ENCODE measurements at regions of chr6 and their contacts with region 1.

Region 1: GRCh38 chr6:136706420-136706819 is 85.9 kb downstream of the MAP3K5 start:
- DNase-seq: no peak
- ATAC-seq: no peak
- H3K4me3 ChIP-seq: no peak overlapping the region
- H3K4me3 Mint-ChIP-seq: no peak overlapping the region
- H3K27ac ChIP-seq: no peak overlapping the region
- H3K27ac Mint-ChIP-seq: no peak overlapping the region
- H3K4me1 ChIP-seq: peaks cover 3 to 8% of the 10 kb centered on the region in 2 donors
- H3K4me1 Mint-ChIP-seq: peaks cover 18% of the 10 kb centered on the region
- H3K27me3 ChIP-seq: no peaks in the 10 kb centered on the region
- H3K27me3 Mint-ChIP-seq: no peaks in the 10 kb centered on the region
- CTCF ChIP-seq: no peak

Region 2: GRCh38 chr6:136077834-136078576 is 628.4 kb before region 1 on chr6:
- CTCF ChIA-PET with region 1: no interaction called
- POLR2A ChIA-PET with region 1: no interaction called
- intact Hi-C with region 1: no loop called
- DNase-seq: no peak
- ATAC-seq: no peak
- H3K4me3 ChIP-seq: no peak overlapping the region
- H3K4me3 Mint-ChIP-seq: no peak overlapping the region
- H3K27ac ChIP-seq: no peak overlapping the region
- H3K27ac Mint-ChIP-seq: no peak overlapping the region
- H3K4me1 ChIP-seq: no peaks in the 10 kb centered on the region
- H3K4me1 Mint-ChIP-seq: no peaks in the 10 kb centered on the region
- H3K27me3 ChIP-seq: no peaks in the 10 kb centered on the region
- H3K27me3 Mint-ChIP-seq: no peaks in the 10 kb centered on the region
- CTCF ChIP-seq: no peak

Region 3: DNA sequence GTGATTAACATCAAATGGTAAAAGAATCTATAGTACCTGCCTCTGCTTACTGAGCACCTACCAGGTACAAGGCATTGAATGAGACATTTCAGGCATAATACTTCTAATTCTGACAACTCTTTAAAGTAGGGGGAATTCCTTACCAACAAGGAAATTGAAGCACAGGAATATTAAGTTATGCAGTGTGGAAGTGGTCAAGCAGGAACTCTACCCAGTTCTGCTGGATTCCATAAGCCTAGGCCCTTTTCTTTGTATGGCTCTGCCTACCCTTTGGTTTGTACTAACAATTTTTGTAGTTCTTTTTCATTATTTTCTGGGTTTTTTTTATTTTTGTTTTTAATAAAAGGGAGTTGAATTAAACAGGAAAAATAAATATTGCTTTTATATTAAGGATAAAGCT is 28.6 kb before region 1 on chr6:
- CTCF ChIA-PET with region 1: no interaction called
- POLR2A ChIA-PET with region 1: no interaction called
- intact Hi-C with region 1: loop called (anchors 5 kb)
- DNase-seq: no peak
- ATAC-seq: no peak
- H3K4me3 ChIP-seq: no peak overlapping the region
- H3K4me3 Mint-ChIP-seq: no peak overlapping the region
- H3K27ac ChIP-seq: no peak overlapping the region
- H3K27ac Mint-ChIP-seq: no peak overlapping the region
- H3K4me1 ChIP-seq: no peaks in the 10 kb centered on the region
- H3K4me1 Mint-ChIP-seq: no peaks in the 10 kb centered on the region
- H3K27me3 ChIP-seq: no peaks in the 10 kb centered on the region
- H3K27me3 Mint-ChIP-seq: no peaks in the 10 kb centered on the region
- CTCF ChIP-seq: no peak

Region 4: GRCh38 chr6:136873748-136874147 is 167.3 kb after region 1 on chr6:
- CTCF ChIA-PET with region 1: no interaction called
- POLR2A ChIA-PET with region 1: no interaction called
- intact Hi-C with region 1: no loop called
- DNase-seq: no peak
- ATAC-seq: no peak
- H3K4me3 ChIP-seq: no peak overlapping the region
- H3K4me3 Mint-ChIP-seq: no peak overlapping the region
- H3K27ac ChIP-seq: no peak overlapping the region
- H3K27ac Mint-ChIP-seq: no peak overlapping the region
- H3K4me1 ChIP-seq: no peaks in the 10 kb centered on the region
- H3K4me1 Mint-ChIP-seq: no peaks in the 10 kb centered on the region
- H3K27me3 ChIP-seq: no peaks in the 10 kb centered on the region
- H3K27me3 Mint-ChIP-seq: no peaks in the 10 kb centered on the region
- CTCF ChIP-seq: no peak

Measured in B cell (primary cell).